ENCODE measurements at regions of chr3 and their contacts with region 1.

Region 1: GRCh38 chr3:197673170-197673569 is 63.5 kb downstream of the RUBCN start:
- DNase-seq: no peak
- ATAC-seq: no peak
- H3K4me3 ChIP-seq: no peak overlapping the region
- H3K27ac ChIP-seq: no peak overlapping the region
- H3K4me1 ChIP-seq: 0 out of 2 replicates have a peak, but pooled peaks cover 2% of the 10 kb centered on the region
- H3K27me3 ChIP-seq: no peaks in the 10 kb centered on the region
- CTCF ChIP-seq: no peak

Region 2: GRCh38 chr3:196948442-196949284 is 724.5 kb before region 1 on chr3:
- CTCF ChIA-PET with region 1: no interaction called
- POLR2A ChIA-PET with region 1: no interaction called
- intact Hi-C with region 1: no loop called
- DNase-seq: no peak
- ATAC-seq: 0 out of 2 replicates have a peak, but pooled peaks have one; percentile 31
- H3K4me3 ChIP-seq: no peak overlapping the region
- H3K27ac ChIP-seq: no peak overlapping the region
- H3K4me1 ChIP-seq: peaks cover 2% of the 10 kb centered on the region; the same call in 1 of the 2 replicates
- H3K27me3 ChIP-seq: no peaks in the 10 kb centered on the region
- CTCF ChIP-seq: no peak

Region 3: DNA sequence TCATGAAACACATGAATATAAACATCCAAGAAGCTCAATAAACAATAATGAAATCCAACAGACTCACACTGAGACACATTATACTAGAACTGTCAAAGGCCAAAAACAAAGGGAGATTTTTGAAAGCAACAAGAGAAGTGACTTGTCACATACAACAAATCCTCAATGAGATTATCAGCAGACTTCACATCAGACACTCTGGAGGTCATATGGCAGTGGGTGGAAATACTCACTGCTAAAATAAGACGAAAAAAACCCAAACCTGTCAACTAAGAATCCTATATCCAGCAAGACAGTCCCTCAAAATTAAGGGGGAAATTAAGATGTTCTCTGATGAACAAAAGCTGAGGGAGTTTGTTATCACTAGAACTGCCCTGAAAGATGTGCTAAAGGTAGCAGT is 518.1 kb before region 1 on chr3:
- CTCF ChIA-PET with region 1: no interaction called
- POLR2A ChIA-PET with region 1: no interaction called
- intact Hi-C with region 1: no loop called
- DNase-seq: no peak
- ATAC-seq: no peak
- H3K4me3 ChIP-seq: no peak overlapping the region
- H3K27ac ChIP-seq: no peak overlapping the region
- H3K4me1 ChIP-seq: peaks cover 7% of the 10 kb centered on the region
- H3K27me3 ChIP-seq: no peaks in the 10 kb centered on the region
- CTCF ChIP-seq: no peak

Region 4: GRCh38 chr3:197378985-197379718 is 294.0 kb before region 1 on chr3:
- CTCF ChIA-PET with region 1: no interaction called
- POLR2A ChIA-PET with region 1: interaction called, 23 read pairs
- intact Hi-C with region 1: no loop called
- DNase-seq: no peak
- ATAC-seq: no peak
- H3K4me3 ChIP-seq: no peak overlapping the region
- H3K27ac ChIP-seq: no peak overlapping the region
- H3K4me1 ChIP-seq: no peaks in the 10 kb centered on the region
- H3K27me3 ChIP-seq: 0 out of 2 replicates have a peak, but pooled peaks cover 2% of the 10 kb centered on the region
- CTCF ChIP-seq: no peak

Region 5: DNA sequence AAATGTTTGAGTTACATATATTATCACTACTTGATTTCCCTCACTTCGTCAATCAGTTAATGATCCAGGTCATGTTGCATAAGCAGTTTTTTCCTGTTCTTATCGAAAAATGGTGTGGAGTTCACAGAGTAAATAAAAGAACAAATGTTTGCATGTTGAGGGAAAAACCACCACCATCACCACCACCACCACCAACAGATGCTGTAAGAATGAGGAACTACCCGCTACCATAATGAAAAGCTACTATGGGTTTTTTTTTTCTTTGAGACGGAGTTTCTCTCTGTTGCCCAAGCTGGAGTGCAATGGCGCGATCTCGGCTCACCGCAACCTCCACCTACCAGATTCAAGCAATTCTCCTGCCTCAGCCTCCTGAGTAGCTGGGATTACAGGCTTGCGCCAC is 36.0 kb after region 1 on chr3:
- CTCF ChIA-PET with region 1: no interaction called
- POLR2A ChIA-PET with region 1: no interaction called
- intact Hi-C with region 1: no loop called
- DNase-seq: no peak
- ATAC-seq: no peak
- H3K4me3 ChIP-seq: no peak overlapping the region
- H3K27ac ChIP-seq: no peak overlapping the region
- H3K4me1 ChIP-seq: peaks cover 19% of the 10 kb centered on the region
- H3K27me3 ChIP-seq: no peaks in the 10 kb centered on the region
- CTCF ChIP-seq: no peak

Region 6: DNA sequence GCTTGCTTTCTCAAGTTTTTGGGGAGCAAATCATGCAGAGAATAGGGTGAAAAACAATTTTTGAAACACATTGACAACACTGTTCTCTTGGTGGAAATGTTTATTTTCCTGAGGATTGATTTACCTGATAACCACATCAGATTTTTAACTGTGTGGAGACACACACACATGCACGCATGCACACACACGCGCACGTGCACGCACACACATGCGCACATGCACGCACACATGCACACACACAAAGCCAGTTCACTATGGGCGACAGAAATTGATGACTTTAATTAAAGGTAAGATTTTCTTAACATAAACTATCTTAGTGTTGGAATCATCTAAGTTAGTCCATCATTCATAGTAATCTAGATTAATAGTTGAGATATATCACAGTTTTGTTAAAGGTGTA is 302.1 kb after region 1 on chr3:
- CTCF ChIA-PET with region 1: no interaction called
- POLR2A ChIA-PET with region 1: no interaction called
- intact Hi-C with region 1: no loop called
- DNase-seq: no peak
- ATAC-seq: no peak
- H3K4me3 ChIP-seq: no peak overlapping the region
- H3K27ac ChIP-seq: no peak overlapping the region
- H3K4me1 ChIP-seq: no peaks in the 10 kb centered on the region
- H3K27me3 ChIP-seq: no peaks in the 10 kb centered on the region
- CTCF ChIP-seq: no peak